ENCODE measurements at regions of chr6 and their contacts with region 1.

Region 1: GRCh38 chr6:98845211-98846020 is 11.0 kb downstream of the POU3F2 start:
- DNase-seq: peak; percentile 58
- H3K4me3 ChIP-seq: no peak overlapping the region
- H3K27ac ChIP-seq: no peak overlapping the region
- H3K4me1 ChIP-seq: peaks cover 5% of the 10 kb centered on the region
- H3K27me3 ChIP-seq: peaks cover 50% of the 10 kb centered on the region
- CTCF ChIP-seq: peak; percentile 79 to 93

Region 2: DNA sequence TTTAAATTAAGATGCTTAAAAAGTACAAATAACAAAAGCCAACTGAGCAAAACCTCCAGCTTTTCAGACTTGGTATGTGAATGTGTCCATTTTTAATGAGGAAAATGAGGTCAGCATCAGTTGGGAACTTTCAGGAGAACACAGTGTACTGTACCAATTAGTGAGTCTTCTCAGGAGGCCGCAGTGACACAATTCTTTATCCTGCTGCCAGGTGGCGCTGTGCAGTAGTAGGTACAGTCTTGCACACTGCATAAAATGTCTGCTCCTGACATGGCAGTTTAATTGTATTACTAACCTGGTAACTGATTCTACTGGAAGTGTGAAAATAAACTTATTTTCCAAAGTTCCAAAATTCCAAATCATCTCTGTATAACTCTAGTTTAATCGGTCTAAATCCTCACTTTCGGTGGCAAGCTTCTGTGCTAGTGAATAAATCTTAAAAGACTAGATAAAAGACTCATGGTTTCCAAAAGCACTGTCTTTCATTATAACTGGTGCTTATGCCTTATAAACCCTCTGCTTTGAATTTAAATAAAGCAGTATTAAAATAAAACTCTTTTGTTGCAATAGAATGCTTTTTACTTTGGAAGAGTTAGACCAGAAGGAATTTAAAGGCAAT is 1347.6 kb before region 1 on chr6:
- CTCF ChIA-PET with region 1: no interaction called
- dilution Hi-C with region 1: no loop called
- in situ Hi-C with region 1: no loop called
- intact Hi-C with region 1: loop called (anchors 1 kb)
- DNase-seq: peak; percentile 45
- H3K4me3 ChIP-seq: no peak overlapping the region
- H3K27ac ChIP-seq: no peak overlapping the region
- H3K4me1 ChIP-seq: no peaks in the 10 kb centered on the region
- H3K27me3 ChIP-seq: peaks cover 3% of the 10 kb centered on the region
- CTCF ChIP-seq: peak; percentile 91 to 97

Region 3: GRCh38 chr6:98054453-98054852 is 791.0 kb before region 1 on chr6:
- CTCF ChIA-PET with region 1: no interaction called
- dilution Hi-C with region 1: no loop called
- in situ Hi-C with region 1: no loop called
- intact Hi-C with region 1: loop called (anchors 2 kb)
- DNase-seq: peak; percentile 6
- H3K4me3 ChIP-seq: no peak overlapping the region
- H3K27ac ChIP-seq: no peak overlapping the region
- H3K4me1 ChIP-seq: no peaks in the 10 kb centered on the region
- H3K27me3 ChIP-seq: no peaks in the 10 kb centered on the region
- CTCF ChIP-seq: peak; percentile 35 to 59

Region 4: DNA sequence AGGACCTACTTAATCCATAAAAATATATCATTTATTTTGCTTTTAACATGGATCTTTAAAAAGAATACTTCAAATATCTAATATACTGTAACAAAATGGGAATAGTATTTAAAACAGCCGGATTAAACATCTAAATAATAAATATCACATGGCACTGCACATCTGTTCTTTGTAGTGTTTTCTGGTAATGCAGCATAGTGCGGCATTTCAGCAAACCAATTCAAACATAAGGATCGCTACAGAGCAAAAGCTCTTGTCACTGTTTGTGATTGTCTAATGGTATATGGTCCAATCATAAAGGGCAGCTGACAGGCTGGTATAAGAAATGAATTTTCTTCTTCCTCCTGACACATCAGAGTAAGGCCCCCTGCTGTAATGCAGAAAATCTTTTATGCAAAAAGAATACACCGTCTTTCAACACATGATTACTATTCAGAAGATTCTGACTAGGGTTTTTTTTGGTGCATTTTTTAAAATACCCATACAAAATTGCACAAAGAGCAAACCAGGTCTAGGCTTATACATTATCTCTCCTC is 51.0 kb before region 1 on chr6:
- CTCF ChIA-PET with region 1: no interaction called
- dilution Hi-C with region 1: loop called (anchors 5 kb)
- in situ Hi-C with region 1: no loop called
- intact Hi-C with region 1: no loop called
- DNase-seq: no peak
- H3K4me3 ChIP-seq: no peak overlapping the region
- H3K27ac ChIP-seq: no peak overlapping the region
- H3K4me1 ChIP-seq: no peaks in the 10 kb centered on the region
- H3K27me3 ChIP-seq: peaks cover 2% of the 10 kb centered on the region
- CTCF ChIP-seq: no peak

Region 5: GRCh38 chr6:98944598-98945081 is 99.2 kb after region 1 on chr6:
- CTCF ChIA-PET with region 1: no interaction called
- dilution Hi-C with region 1: no loop called
- in situ Hi-C with region 1: no loop called
- intact Hi-C with region 1: no loop called
- DNase-seq: peak; percentile 13
- H3K4me3 ChIP-seq: no peak overlapping the region
- H3K27ac ChIP-seq: no peak overlapping the region
- H3K4me1 ChIP-seq: peaks cover 19% of the 10 kb centered on the region
- H3K27me3 ChIP-seq: no peaks in the 10 kb centered on the region
- CTCF ChIP-seq: no peak

Region 6: GRCh38 chr6:99101370-99101769 is 256.0 kb after region 1 on chr6:
- CTCF ChIA-PET with region 1: no interaction called
- dilution Hi-C with region 1: no loop called
- in situ Hi-C with region 1: no loop called
- intact Hi-C with region 1: no loop called
- DNase-seq: no peak
- H3K4me3 ChIP-seq: no peak overlapping the region
- H3K27ac ChIP-seq: no peak overlapping the region
- H3K4me1 ChIP-seq: no peaks in the 10 kb centered on the region
- H3K27me3 ChIP-seq: no peaks in the 10 kb centered on the region
- CTCF ChIP-seq: no peak

Region 7: GRCh38 chr6:99241905-99242534 is 396.6 kb after region 1 on chr6:
- CTCF ChIA-PET with region 1: no interaction called
- dilution Hi-C with region 1: no loop called
- in situ Hi-C with region 1: no loop called
- intact Hi-C with region 1: loop called (anchors 10 kb)
- DNase-seq: peak; percentile 35
- H3K4me3 ChIP-seq: no peak overlapping the region
- H3K27ac ChIP-seq: no peak overlapping the region
- H3K4me1 ChIP-seq: no peaks in the 10 kb centered on the region
- H3K27me3 ChIP-seq: peaks cover 3% of the 10 kb centered on the region
- CTCF ChIP-seq: peak; percentile 70